ENCODE measurements at regions of chrX and their contacts with region 1.

Region 1: DNA sequence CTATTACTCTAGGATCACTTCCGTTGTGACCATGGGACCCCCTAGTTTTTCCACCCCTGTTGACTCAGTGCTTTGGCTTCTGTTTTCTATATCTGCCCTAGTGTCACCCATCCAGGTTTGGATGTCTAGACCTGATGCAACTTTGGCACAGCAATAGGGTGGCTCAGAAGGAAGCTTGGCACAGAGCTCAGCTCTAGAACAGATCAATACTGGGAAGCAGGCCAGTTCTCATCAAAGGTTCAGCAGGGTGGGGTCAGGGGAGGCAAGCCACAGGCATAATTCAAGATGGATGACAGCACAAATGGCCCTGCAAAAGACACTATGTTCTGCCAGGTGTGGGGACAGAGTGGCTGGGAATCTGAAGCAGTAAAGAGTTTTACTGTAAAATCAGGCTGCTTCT is 74.2 kb upstream of the EGFL6 start:
- DNase-seq: no peak
- H3K4me3 ChIP-seq: no peak overlapping the region
- H3K4me3 Mint-ChIP-seq: no peak overlapping the region
- H3K27ac ChIP-seq: no peak overlapping the region
- H3K27ac Mint-ChIP-seq: peak overlapping the region in 1 of 7 donors; percentile 27
- H3K4me1 ChIP-seq: peaks cover 39 to 42% of the 10 kb centered on the region in 2 donors
- H3K4me1 Mint-ChIP-seq: peaks cover 25% of the 10 kb centered on the region
- H3K27me3 ChIP-seq: peaks cover 0 to 29% of the 10 kb centered on the region in 2 donors
- H3K27me3 Mint-ChIP-seq: peaks cover 0 to 37% (median 0%) of the 10 kb centered on the region in 3 donors
- CTCF ChIP-seq: no peak

Region 2: GRCh38 chrX:12825801-12826200 is 669.4 kb before region 1 on chrX:
- intact Hi-C with region 1: loop called in 1 of 2 experiments (anchors 10 kb)
- DNase-seq: no peak
- H3K4me3 ChIP-seq: no peak overlapping the region
- H3K4me3 Mint-ChIP-seq: no peak overlapping the region
- H3K27ac ChIP-seq: no peak overlapping the region
- H3K27ac Mint-ChIP-seq: no peak overlapping the region
- H3K4me1 ChIP-seq: no peaks in the 10 kb centered on the region
- H3K4me1 Mint-ChIP-seq: peaks cover 6% of the 10 kb centered on the region
- H3K27me3 ChIP-seq: peaks cover 0 to 2% of the 10 kb centered on the region in 2 donors
- H3K27me3 Mint-ChIP-seq: peaks cover 0 to 21% (median 1%) of the 10 kb centered on the region in 3 donors
- CTCF ChIP-seq: no peak

Region 3: DNA sequence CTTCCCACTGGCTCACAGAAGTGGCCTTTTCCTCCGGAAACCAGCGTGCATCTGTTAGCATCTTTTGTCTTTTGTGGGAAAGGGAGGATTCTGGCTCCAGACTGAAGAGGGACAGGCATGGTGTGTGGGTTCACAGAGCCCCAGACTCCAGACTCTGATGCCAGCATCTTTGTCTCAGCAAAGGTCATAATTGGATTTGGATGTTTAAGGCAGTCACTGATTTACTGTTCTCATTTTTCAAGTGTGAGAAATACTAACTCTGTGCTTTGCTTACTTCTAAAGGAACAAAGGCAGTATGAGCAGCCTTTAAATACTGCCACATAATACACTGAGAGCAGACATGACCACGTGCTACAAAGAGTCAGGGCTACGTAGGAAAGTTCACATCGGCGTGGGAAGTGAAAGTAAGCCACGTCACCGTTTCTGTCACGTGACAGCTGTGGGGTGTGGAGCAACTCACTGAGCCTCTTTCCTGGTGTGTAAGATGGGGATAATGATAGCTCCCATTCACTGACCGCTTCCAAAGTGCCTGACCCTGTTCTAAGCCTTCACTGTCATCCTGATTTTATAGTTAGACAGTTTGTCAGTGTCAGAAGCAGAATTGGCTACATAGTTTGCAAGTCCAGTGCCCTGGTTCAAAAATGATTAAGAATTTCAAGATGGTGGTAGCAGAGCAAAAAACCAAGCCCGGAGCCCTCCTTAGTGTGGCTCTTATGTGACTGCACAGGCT is 545.1 kb before region 1 on chrX:
- intact Hi-C with region 1: loop called in 1 of 2 experiments (anchors 10 kb)
- DNase-seq: peak; percentile 91 to 97 (median 96)
- H3K4me3 ChIP-seq: peak overlapping the region; percentile 13 to 44 (median 24)
- H3K4me3 Mint-ChIP-seq: peak overlapping the region; percentile 77 to 86
- H3K27ac ChIP-seq: peak overlapping the region; percentile 86 to 94
- H3K27ac Mint-ChIP-seq: peak overlapping the region; percentile 96 to 99 (median 98)
- H3K4me1 ChIP-seq: peaks cover 78 to 87% of the 10 kb centered on the region in 2 donors
- H3K4me1 Mint-ChIP-seq: peaks cover 75% of the 10 kb centered on the region
- H3K27me3 ChIP-seq: peaks cover 0 to 17% of the 10 kb centered on the region in 2 donors
- H3K27me3 Mint-ChIP-seq: peaks cover 0 to 42% (median 0%) of the 10 kb centered on the region in 3 donors
- CTCF ChIP-seq: no peak

Region 4: GRCh38 chrX:12974796-12975669 is 520.2 kb before region 1 on chrX and contains the start of gene TMSB4X:
- intact Hi-C with region 1: loop called in 1 of 2 experiments (anchors 10 kb)
- DNase-seq: peak; percentile 70 to 85 (median 79)
- H3K4me3 ChIP-seq: peak within 1 kb of the TSS; percentile 87 to 97 (median 95)
- H3K4me3 Mint-ChIP-seq: peak within 1 kb of the TSS; percentile 98
- H3K27ac ChIP-seq: peak within 1 kb of the TSS; percentile 93 to 98
- H3K27ac Mint-ChIP-seq: peak within 1 kb of the TSS; percentile 94 to 99 (median 97)
- H3K4me1 ChIP-seq: peaks cover 41 to 77% of the 10 kb centered on the region in 2 donors
- H3K4me1 Mint-ChIP-seq: peaks cover 46% of the 10 kb centered on the region
- H3K27me3 ChIP-seq: peaks cover 0 to 8% of the 10 kb centered on the region in 2 donors
- H3K27me3 Mint-ChIP-seq: peaks cover 0 to 81% (median 0%) of the 10 kb centered on the region in 3 donors
- CTCF ChIP-seq: no peak
- polyA plus RNA-seq, gene TMSB4X: 15,641 to 31,074 (median 27,127) TPM

Region 5: GRCh38 chrX:13669246-13669737 is 174.1 kb after region 1 on chrX:
- intact Hi-C with region 1: no loop called
- DNase-seq: peak; percentile 73 to 94 (median 73)
- H3K4me3 ChIP-seq: no peak overlapping the region
- H3K4me3 Mint-ChIP-seq: peak overlapping the region; percentile 12 to 60
- H3K27ac ChIP-seq: peak overlapping the region in 1 of 2 donors; percentile 67
- H3K27ac Mint-ChIP-seq: peak overlapping the region; percentile 49 to 79 (median 71)
- H3K4me1 ChIP-seq: peaks cover 23 to 29% of the 10 kb centered on the region in 2 donors
- H3K4me1 Mint-ChIP-seq: peaks cover 31% of the 10 kb centered on the region
- H3K27me3 ChIP-seq: no peaks in the 10 kb centered on the region
- H3K27me3 Mint-ChIP-seq: peaks cover 0 to 11% (median 3%) of the 10 kb centered on the region in 3 donors
- CTCF ChIP-seq: no peak